Mammary epithelial cell (primary cell): ENCODE measurements at regions of chr19 and their contacts with region 1.

Region 1: GRCh38 chr19:7943444-7944176 is at the start of gene TIMM44:
- DNase-seq: peak; percentile 100
- H3K4me3 ChIP-seq: peak within 1 kb of the TSS; percentile 89 to 97 (median 93)
- H3K27ac ChIP-seq: peak within 1 kb of the TSS; percentile 98
- H3K4me1 ChIP-seq: peaks cover 7% of the 10 kb centered on the region
- H3K27me3 ChIP-seq: no peaks in the 10 kb centered on the region
- CTCF ChIP-seq: no peak
- total RNA-seq, gene TIMM44: 52.7 to 94.3 TPM

Region 2: GRCh38 chr19:7919610-7920518 is 23.7 kb before region 1 on chr19 and contains the start of gene SNAPC2:
- CTCF ChIA-PET with region 1: interaction called, 33 read pairs
- dilution Hi-C with region 1: no loop called
- in situ Hi-C with region 1: no loop called
- intact Hi-C with region 1: no loop called
- DNase-seq: peak; percentile 90
- H3K4me3 ChIP-seq: peak within 1 kb of the TSS; percentile 76 to 86 (median 79)
- H3K27ac ChIP-seq: peak within 1 kb of the TSS; percentile 52
- H3K4me1 ChIP-seq: peaks cover 32% of the 10 kb centered on the region
- H3K27me3 ChIP-seq: peaks cover 14% of the 10 kb centered on the region
- CTCF ChIP-seq: peak in 1 of 2 donors; percentile 3
- total RNA-seq, gene SNAPC2: 11.2 to 27.2 TPM

Region 3: GRCh38 chr19:7925171-7925851 is 18.3 kb before region 1 on chr19:
- CTCF ChIA-PET with region 1: interaction called, 33 read pairs
- dilution Hi-C with region 1: no loop called
- in situ Hi-C with region 1: no loop called
- intact Hi-C with region 1: loop called (anchors 1 kb)
- DNase-seq: no peak
- H3K4me3 ChIP-seq: peak overlapping the region in 2 of 3 experiments; percentile 37 to 42
- H3K27ac ChIP-seq: no peak overlapping the region
- H3K4me1 ChIP-seq: peaks cover 53% of the 10 kb centered on the region
- H3K27me3 ChIP-seq: no peaks in the 10 kb centered on the region
- CTCF ChIP-seq: peak; percentile 64 to 77

Region 4: GRCh38 chr19:7986321-7987083 is 42.9 kb after region 1 on chr19:
- CTCF ChIA-PET with region 1: interaction called, 7 read pairs
- dilution Hi-C with region 1: no loop called
- in situ Hi-C with region 1: no loop called
- intact Hi-C with region 1: loop called (anchors 5 kb)
- DNase-seq: peak; percentile 47
- H3K4me3 ChIP-seq: no peak overlapping the region
- H3K27ac ChIP-seq: no peak overlapping the region
- H3K4me1 ChIP-seq: peaks cover 54% of the 10 kb centered on the region
- H3K27me3 ChIP-seq: no peaks in the 10 kb centered on the region
- CTCF ChIP-seq: no peak

Region 5: GRCh38 chr19:8005534-8006256 is 62.1 kb after region 1 on chr19 and contains the start of gene ELAVL1:
- CTCF ChIA-PET with region 1: interaction called, 4 read pairs
- dilution Hi-C with region 1: no loop called
- in situ Hi-C with region 1: no loop called
- intact Hi-C with region 1: loop called (anchors 1 kb)
- DNase-seq: peak; percentile 90
- H3K4me3 ChIP-seq: peak within 1 kb of the TSS; percentile 97 to 100 (median 99)
- H3K27ac ChIP-seq: peak within 1 kb of the TSS; percentile 54
- H3K4me1 ChIP-seq: peaks cover 24% of the 10 kb centered on the region
- H3K27me3 ChIP-seq: no peaks in the 10 kb centered on the region
- CTCF ChIP-seq: no peak
- total RNA-seq, gene ELAVL1: 33.3 to 88.1 TPM

Region 6: DNA sequence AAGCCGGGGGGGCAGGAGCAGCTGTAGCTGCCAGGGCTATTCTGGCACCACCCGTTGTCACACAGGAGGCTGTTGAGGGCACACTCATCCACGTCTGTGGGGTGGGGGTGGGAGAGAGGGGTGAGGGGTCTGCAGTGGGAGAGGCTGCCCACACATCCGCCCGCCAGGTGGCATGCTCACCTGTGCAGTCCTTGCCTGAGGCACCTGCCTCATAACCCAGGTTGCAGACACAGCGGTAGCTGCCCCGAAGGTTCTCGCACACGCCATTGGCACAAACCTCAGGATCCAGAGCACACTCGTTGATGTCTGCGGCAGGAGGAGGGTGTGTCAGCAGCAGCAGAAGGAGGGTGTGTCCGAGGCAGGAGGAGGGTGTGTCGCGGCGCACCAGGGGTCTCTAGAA is 185.4 kb after region 1 on chr19:
- CTCF ChIA-PET with region 1: no interaction called
- dilution Hi-C with region 1: no loop called
- in situ Hi-C with region 1: no loop called
- intact Hi-C with region 1: no loop called
- DNase-seq: no peak
- H3K4me3 ChIP-seq: no peak overlapping the region
- H3K27ac ChIP-seq: no peak overlapping the region
- H3K4me1 ChIP-seq: no peaks in the 10 kb centered on the region
- H3K27me3 ChIP-seq: peaks cover 7% of the 10 kb centered on the region
- CTCF ChIP-seq: no peak

Region 7: GRCh38 chr19:8158411-8159074 is 214.9 kb after region 1 on chr19:
- CTCF ChIA-PET with region 1: no interaction called
- dilution Hi-C with region 1: no loop called
- in situ Hi-C with region 1: no loop called
- intact Hi-C with region 1: loop called (anchors 1 kb)
- DNase-seq: peak; percentile 76
- H3K4me3 ChIP-seq: no peak overlapping the region
- H3K27ac ChIP-seq: no peak overlapping the region
- H3K4me1 ChIP-seq: peaks cover 9% of the 10 kb centered on the region
- H3K27me3 ChIP-seq: no peaks in the 10 kb centered on the region
- CTCF ChIP-seq: peak; percentile 73 to 78

Region 8: DNA sequence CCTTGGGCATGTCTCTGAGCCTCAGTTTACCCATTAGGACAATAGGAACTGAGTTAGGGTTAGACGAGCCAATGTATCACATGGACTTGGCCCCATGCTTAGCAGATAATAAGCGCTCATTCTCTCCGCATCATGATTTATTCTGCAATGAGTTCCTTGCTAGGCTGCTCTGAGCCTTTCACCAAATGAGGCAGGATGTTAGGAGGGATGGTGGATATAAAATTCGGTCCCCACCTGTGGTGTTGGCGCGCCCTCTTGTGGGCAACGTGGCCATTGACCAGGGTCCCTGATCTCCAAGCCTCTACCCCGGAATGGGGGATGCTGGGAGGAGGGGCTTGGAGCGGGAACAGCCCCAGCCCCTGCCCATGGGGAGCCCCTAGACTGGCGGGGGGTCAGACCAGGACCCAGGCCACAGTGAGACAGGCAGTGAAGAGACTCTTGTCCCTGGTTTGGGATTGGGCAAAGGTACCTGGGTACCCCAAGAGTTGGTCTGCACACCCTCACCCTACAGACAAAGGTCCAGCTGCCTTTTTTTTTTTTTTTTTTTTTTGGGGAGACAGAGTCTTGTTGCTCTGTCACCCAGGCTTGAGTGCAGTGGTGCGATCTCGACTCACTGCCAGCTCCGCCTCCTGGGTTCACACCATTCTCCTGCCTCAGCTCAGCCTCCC is 309.4 kb after region 1 on chr19:
- CTCF ChIA-PET with region 1: no interaction called
- dilution Hi-C with region 1: no loop called
- in situ Hi-C with region 1: no loop called
- intact Hi-C with region 1: loop called (anchors 1 kb)
- DNase-seq: peak; percentile 54
- H3K4me3 ChIP-seq: no peak overlapping the region
- H3K27ac ChIP-seq: no peak overlapping the region
- H3K4me1 ChIP-seq: peaks cover 3% of the 10 kb centered on the region
- H3K27me3 ChIP-seq: no peaks in the 10 kb centered on the region
- CTCF ChIP-seq: peak; percentile 82 to 94